AG04450 (cell line): ENCODE measurements at regions of chr9 and their contacts with region 1.

Region 1: GRCh38 chr9:126914458-126915280 is at the start of gene RALGPS1:
- DNase-seq: peak; percentile 91
- H3K4me3 ChIP-seq: peak within 1 kb of the TSS; percentile 51
- H3K27ac ChIP-seq: no peak within 1 kb of the TSS
- H3K27me3 ChIP-seq: peaks cover 10% of the 10 kb centered on the region
- CTCF ChIP-seq: no peak
- polyA plus RNA-seq, gene RALGPS1: 4.4 and 4.6 TPM in 2 replicates

Region 2: DNA sequence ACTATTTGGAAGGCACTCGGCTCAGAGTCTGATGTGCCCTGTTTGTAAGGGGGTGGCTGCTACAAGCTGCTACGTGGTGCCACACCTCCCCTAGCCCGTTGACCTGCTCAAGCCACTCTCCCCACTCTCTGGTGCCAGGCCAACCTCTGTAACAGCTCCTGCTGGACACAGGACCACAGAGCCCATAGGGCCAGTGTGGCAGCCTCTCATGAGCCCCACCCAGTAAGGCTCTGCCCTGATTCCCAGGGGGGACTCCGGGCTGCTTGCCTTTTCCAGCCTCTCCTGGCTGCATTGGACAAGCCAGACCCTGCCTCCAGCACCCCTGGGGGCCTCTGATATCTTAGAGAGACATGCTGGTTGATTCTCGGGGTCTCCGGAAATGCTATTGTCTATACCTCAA is 261.1 kb after region 1 on chr9:
- CTCF ChIA-PET with region 1: no interaction called
- POLR2A ChIA-PET with region 1: interaction called, 11 read pairs
- DNase-seq: no peak
- H3K4me3 ChIP-seq: no peak overlapping the region
- H3K27ac ChIP-seq: no peak overlapping the region
- H3K27me3 ChIP-seq: no peaks in the 10 kb centered on the region
- CTCF ChIP-seq: no peak